ENCODE measurements at regions of chr17 and their contacts with region 1.

Region 1: GRCh38 chr17:44199553-44200477 is at the start of gene ATXN7L3:
- DNase-seq: peak; percentile 98
- H3K4me3 Mint-ChIP-seq: peak within 1 kb of the TSS; percentile 89
- H3K27ac Mint-ChIP-seq: peak within 1 kb of the TSS; percentile 93
- H3K4me1 Mint-ChIP-seq: peaks cover 42% of the 10 kb centered on the region
- H3K27me3 Mint-ChIP-seq: no peaks in the 10 kb centered on the region
- total RNA-seq, gene ATXN7L3: 107 and 113 TPM in 2 replicates

Region 2: GRCh38 chr17:44186307-44187130 is 13.3 kb before region 1 on chr17 and contains the start of gene TMUB2:
- intact Hi-C with region 1: loop called (anchors 1 kb)
- DNase-seq: peak; percentile 99
- H3K4me3 Mint-ChIP-seq: peak within 1 kb of the TSS; percentile 98
- H3K27ac Mint-ChIP-seq: peak within 1 kb of the TSS; percentile 97
- H3K4me1 Mint-ChIP-seq: peaks cover 31% of the 10 kb centered on the region
- H3K27me3 Mint-ChIP-seq: no peaks in the 10 kb centered on the region
- total RNA-seq, gene TMUB2: 20.4 and 20.9 TPM in 2 replicates

Region 3: GRCh38 chr17:44210342-44211192 is 10.8 kb after region 1 on chr17:
- intact Hi-C with region 1: loop called (anchors 1 kb)
- DNase-seq: peak; percentile 91
- H3K4me3 Mint-ChIP-seq: peak overlapping the region; percentile 75
- H3K27ac Mint-ChIP-seq: peak overlapping the region; percentile 88
- H3K4me1 Mint-ChIP-seq: peaks cover 23% of the 10 kb centered on the region
- H3K27me3 Mint-ChIP-seq: no peaks in the 10 kb centered on the region

Region 4: DNA sequence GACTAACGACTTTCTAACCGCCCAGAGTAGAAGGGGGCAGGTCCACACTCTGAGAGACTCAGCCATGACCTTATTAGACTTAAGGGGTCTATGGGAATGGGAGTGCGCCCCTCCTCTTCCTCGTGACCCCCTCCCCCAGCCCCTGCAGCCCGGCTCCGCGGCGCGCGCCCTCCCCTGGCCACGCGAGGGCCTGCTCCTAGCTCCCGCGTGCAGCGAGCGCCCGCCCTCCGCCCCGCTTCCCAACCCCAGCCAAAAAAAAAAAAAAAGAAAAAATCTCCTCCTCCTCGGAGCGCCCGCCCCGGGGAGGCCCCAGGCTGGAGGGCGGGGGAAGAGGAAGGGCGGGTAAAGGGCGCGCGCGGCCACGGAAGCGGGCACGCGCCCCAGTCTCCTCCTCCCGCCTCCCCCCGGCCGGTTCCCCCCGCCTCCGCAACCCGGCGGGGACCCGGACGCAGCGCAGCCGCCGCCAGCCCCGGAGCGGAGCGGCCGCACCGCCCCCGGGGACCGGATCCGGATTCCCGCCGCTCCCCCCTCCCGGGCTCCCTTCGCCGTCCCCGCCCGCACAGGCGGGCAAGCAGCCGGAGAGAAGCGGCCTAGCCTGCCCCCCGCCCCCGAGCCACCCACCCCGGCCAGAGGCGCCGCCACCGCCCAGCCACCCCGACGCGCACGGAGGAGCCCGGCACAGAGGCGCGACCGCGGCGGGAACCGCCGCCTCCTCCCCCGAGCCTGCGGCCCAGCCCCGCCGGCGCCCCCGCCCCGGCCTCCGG is 18.7 kb after region 1 on chr17:
- intact Hi-C with region 1: loop called (anchors 1 kb)
- DNase-seq: peak; percentile 86
- H3K4me3 Mint-ChIP-seq: peak overlapping the region; percentile 97
- H3K27ac Mint-ChIP-seq: peak overlapping the region; percentile 93
- H3K4me1 Mint-ChIP-seq: peaks cover 38% of the 10 kb centered on the region
- H3K27me3 Mint-ChIP-seq: no peaks in the 10 kb centered on the region

Region 5: GRCh38 chr17:45051060-45051719 is 851.4 kb after region 1 on chr17 and contains the start of gene DCAKD:
- intact Hi-C with region 1: loop called (anchors 5 kb)
- DNase-seq: peak; percentile 91
- H3K4me3 Mint-ChIP-seq: peak within 1 kb of the TSS; percentile 87
- H3K27ac Mint-ChIP-seq: peak within 1 kb of the TSS; percentile 91
- H3K4me1 Mint-ChIP-seq: peaks cover 32% of the 10 kb centered on the region
- H3K27me3 Mint-ChIP-seq: no peaks in the 10 kb centered on the region
- total RNA-seq, gene DCAKD: 30.0 and 31.0 TPM in 2 replicates

Measured in activated T-helper 2 cell treated with anti-CD3 and anti-CD28 coated beads, Interferon-gamma antibody, Interleukin-2, Interleukin-4, amounts not matched to agents 10 μg/mL and 5 μg/mL and 100 μg/mL, durations not matched to agents 14 hours and 24 hours and 36 hours (primary cell).